ENCODE measurements at regions of chr9 and their contacts with region 1.

Region 1: DNA sequence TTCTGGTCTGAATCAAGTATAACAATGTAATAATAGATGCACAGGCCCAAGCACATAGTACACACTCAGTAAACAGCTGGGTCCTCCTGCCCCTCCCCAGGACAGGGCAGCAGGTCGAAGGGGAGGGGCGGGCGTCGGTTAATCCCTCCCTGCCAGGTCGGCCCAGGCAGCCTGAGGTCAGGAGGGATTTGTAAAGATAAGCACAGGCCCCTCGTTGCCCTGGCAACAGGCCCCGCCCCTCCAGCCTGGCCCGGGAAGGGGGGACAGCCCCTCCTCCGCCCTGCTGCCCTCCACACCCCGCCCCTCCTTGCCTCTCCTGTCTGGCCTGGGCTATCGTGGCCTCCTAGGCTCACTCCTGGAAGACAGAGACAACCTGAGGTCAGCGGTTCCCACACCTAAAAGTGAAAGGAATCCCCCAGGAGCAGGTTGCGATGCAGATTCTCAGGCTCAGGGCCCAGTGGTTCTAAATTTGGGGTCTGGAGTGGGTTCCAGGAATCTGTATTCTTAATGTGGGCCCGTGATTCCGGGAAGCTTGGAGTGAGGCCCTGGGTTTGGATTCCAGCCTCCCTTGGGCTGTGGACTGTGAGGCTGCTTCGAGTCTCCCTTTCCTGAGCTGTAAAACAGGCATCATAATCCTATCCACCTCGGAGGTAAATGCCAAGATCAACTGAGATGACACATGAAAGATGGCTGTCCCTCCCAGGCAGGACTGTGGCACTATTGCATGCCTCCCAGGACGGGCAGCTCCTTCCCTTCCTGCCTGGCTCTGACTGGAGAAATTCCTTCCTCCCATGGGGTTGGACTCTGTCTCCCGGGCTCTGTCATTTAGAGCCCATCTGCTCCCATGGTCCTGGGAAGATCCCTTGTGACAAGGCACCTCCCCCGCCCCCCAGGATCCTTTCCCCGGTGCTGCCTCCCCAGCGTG is 4.4 kb downstream of the CRB2 start:
- DNase-seq: no peak

Region 2: GRCh38 chr9:123375469-123376132 is 15.2 kb after region 1 on chr9:
- intact Hi-C with region 1: no loop called
- DNase-seq: no peak

Region 3: GRCh38 chr9:123485216-123485615 is 124.8 kb after region 1 on chr9:
- intact Hi-C with region 1: no loop called
- DNase-seq: no peak

Region 4: DNA sequence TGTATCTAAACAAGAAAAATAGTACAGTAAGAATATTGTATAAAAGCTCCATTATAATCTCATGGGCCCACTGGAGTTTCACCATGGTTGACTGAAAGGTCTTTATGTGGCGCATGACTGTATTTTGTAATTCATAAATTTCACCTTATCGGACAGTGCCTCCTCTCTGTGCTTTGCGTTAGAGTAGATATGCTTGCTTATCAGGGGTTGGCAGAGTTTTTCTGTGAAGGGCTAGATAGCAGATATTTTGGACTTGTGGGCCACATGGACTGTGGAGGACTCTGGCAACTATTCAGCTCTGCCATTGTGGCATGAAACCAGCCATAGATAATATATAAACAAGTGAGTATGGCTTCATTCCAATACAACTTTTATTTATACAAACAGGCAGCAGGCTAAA is 1924.4 kb after region 1 on chr9:
- intact Hi-C with region 1: loop called in 1 of 2 experiments (anchors 10 kb)
- DNase-seq: no peak

Measured in posterior vena cava (tissue), 2 donors.